Posterior cingulate gyrus (tissue), 11 donors: ENCODE measurements at regions of chr14 and their contacts with region 1.

Region 1: GRCh38 chr14:99628832-99629618 is 15.9 kb upstream of the HHIPL1 start:
- DNase-seq: peak; percentile 71 to 98 (median 85)

Region 2: DNA sequence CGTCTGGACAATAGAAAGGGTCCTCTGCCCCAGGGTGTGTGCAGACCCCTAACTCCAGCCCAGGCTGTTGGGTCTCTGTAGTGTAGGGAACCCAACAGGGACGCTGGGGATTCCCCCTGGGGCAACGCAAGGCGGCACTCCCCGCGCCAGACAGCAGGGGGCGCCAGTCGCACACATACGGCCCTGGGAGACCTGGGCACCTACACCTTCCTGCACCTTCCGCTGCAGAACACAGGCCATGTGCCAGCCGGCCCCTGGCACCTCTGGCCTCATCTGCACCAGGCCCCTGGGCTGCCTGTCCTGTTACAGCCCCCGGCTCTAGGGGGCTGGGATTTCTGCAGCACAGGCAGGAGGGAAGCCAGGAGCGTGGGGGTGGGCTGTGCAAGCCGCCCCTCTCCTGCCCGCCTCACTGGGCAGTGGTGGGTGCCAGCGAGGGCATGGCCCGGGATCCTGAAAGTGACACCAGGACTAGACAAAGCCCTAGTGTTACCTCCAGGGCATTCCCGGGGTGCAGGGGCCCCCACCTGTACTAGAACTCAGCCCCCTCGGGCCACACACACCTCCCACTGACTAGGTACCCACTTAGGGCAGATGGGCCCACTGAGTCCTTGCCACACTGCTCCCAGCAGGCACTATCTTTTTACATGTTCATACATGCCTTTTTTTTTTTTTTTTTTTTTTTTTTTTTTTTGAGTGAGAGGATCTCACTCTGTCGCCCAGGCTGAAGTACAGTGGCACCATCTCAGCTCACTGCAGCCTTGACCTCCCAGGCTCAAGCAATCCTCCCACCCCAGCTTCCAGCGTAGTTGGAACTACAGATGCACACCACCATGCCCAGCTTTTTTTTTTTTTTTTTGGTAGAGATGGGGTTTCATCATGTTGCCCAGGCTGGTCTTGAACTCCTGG is 110.3 kb before region 1 on chr14:
- intact Hi-C with region 1: loop called (anchors 1 kb)
- DNase-seq: peak; percentile 49 to 96 (median 78)

Region 3: GRCh38 chr14:99563233-99564129 is 65.5 kb before region 1 on chr14:
- intact Hi-C with region 1: loop called (anchors 2 kb)
- DNase-seq: peak; percentile 64 to 96 (median 78)